ENCODE measurements at regions of chr6 and their contacts with region 1.

Region 1: GRCh38 chr6:42532038-42532669 is 31.7 kb upstream of the UBR2 start:
- DNase-seq: peak; percentile 75
- ATAC-seq: peak; percentile 63
- H3K4me3 ChIP-seq: no peak overlapping the region
- H3K27ac ChIP-seq: no peak overlapping the region
- H3K4me1 ChIP-seq: peaks cover 14% of the 10 kb centered on the region
- H3K27me3 ChIP-seq: no peaks in the 10 kb centered on the region
- CTCF ChIP-seq: peak; percentile 94

Region 2: GRCh38 chr6:42260972-42261371 is 271.2 kb before region 1 on chr6:
- CTCF ChIA-PET with region 1: interaction called, 3 read pairs
- POLR2A ChIA-PET with region 1: no interaction called
- intact Hi-C with region 1: loop called (anchors 5 kb)
- DNase-seq: peak; percentile 26
- ATAC-seq: peak; percentile 60
- H3K4me3 ChIP-seq: no peak overlapping the region
- H3K27ac ChIP-seq: no peak overlapping the region
- H3K4me1 ChIP-seq: no peaks in the 10 kb centered on the region
- H3K27me3 ChIP-seq: no peaks in the 10 kb centered on the region
- CTCF ChIP-seq: peak; percentile 75

Region 3: DNA sequence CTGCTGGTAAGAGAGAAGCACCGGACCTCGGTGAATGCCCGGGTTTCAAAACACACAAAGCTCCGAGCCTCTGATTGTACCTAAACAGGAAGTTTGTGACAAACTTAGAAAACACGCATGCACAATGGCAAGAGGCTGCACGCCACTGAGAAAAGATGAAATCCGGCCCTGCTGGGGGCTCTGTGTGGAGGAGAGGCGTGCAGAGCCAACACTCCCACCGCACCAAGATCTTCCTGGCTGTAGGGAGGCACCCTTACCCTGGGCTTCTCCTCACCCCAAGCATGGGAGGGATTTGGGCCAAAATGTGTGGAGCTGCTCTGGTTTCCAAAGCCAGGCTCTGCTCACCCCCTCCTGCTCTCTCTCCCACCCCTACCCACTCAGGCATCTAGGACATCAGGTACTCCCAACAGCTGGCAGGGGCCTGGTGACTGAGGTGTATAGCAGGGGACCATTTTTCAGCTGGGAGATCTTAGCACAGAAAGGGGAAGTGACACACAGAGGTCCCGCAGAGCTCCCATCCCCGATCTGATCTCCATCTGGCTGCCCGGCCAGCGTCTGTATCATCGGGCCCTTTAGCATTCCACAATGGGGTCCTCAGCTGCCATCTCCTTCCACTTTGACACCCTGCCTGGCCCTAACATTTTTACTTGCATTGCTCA is 164.7 kb before region 1 on chr6:
- CTCF ChIA-PET with region 1: no interaction called
- POLR2A ChIA-PET with region 1: interaction called, 18 read pairs
- intact Hi-C with region 1: no loop called
- DNase-seq: no peak
- ATAC-seq: no peak
- H3K4me3 ChIP-seq: no peak overlapping the region
- H3K27ac ChIP-seq: no peak overlapping the region
- H3K4me1 ChIP-seq: peaks cover 8% of the 10 kb centered on the region
- H3K27me3 ChIP-seq: no peaks in the 10 kb centered on the region
- CTCF ChIP-seq: no peak

Region 4: DNA sequence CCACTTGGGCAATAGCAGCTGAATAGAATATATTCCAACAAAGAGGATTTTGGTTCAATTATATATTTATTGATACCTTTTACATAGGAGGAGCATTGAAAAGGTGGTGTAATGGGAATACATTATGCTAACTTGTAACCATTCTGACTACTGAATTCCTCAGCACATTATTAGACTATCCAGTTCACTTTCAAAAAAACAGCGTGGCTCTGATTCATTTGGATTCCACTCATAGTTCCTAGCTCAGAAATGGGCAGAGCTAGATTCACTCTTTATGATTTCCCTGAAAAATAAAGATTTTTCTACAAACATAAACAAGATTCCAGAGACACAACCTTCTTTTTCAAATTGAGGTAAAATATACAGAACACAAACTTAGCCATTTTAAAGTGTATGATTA is 71.3 kb before region 1 on chr6:
- CTCF ChIA-PET with region 1: interaction called, 11 read pairs
- POLR2A ChIA-PET with region 1: no interaction called
- intact Hi-C with region 1: no loop called
- DNase-seq: no peak
- ATAC-seq: no peak
- H3K4me3 ChIP-seq: no peak overlapping the region
- H3K27ac ChIP-seq: no peak overlapping the region
- H3K4me1 ChIP-seq: no peaks in the 10 kb centered on the region
- H3K27me3 ChIP-seq: no peaks in the 10 kb centered on the region
- CTCF ChIP-seq: no peak

Region 5: GRCh38 chr6:42547407-42548329 is 15.5 kb after region 1 on chr6:
- CTCF ChIA-PET with region 1: interaction called, 12 read pairs
- POLR2A ChIA-PET with region 1: no interaction called
- intact Hi-C with region 1: no loop called
- DNase-seq: peak; percentile 84
- ATAC-seq: peak; percentile 99
- H3K4me3 ChIP-seq: peak overlapping the region; percentile 67
- H3K27ac ChIP-seq: no peak overlapping the region
- H3K4me1 ChIP-seq: peaks cover 10% of the 10 kb centered on the region
- H3K27me3 ChIP-seq: no peaks in the 10 kb centered on the region
- CTCF ChIP-seq: peak; percentile 98

Measured in PC-3 (cell line).